PC-9 (cell line): ENCODE measurements at regions of chr6 and their contacts with region 1.

Region 1: DNA sequence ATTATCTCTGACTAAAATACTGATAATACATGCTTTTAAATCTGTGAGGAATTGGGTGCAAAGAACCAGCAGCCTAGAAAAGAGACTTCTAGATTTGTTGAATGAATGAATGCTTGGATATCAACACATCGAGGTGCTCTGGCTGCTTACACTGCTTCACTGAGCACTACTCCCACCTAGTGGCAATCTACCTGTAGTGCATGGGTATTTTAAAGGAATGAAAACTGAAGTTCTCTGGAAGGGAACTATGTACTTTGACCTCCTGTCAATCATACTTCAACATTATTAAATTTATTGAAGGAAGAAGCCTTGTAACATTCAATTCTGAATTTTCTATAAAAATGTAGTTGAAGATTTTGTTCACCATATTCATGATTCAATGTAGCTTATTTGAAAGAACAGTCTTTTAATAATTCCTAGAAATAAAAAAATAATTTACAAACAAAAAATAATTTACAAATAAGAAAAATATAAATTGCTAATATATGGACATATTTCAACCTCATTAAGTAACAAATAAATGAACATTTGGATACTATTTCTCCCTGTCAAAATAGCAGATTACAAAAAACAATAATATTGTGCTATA is 111.2 kb upstream of the MMS22L start:
- DNase-seq: peak; percentile 15 to 52
- H3K4me3 ChIP-seq: no peak overlapping the region
- H3K27ac ChIP-seq: no peak overlapping the region
- H3K4me1 ChIP-seq: no peaks in the 10 kb centered on the region
- H3K27me3 ChIP-seq: no peaks in the 10 kb centered on the region
- CTCF ChIP-seq: peak; percentile 96

Region 2: DNA sequence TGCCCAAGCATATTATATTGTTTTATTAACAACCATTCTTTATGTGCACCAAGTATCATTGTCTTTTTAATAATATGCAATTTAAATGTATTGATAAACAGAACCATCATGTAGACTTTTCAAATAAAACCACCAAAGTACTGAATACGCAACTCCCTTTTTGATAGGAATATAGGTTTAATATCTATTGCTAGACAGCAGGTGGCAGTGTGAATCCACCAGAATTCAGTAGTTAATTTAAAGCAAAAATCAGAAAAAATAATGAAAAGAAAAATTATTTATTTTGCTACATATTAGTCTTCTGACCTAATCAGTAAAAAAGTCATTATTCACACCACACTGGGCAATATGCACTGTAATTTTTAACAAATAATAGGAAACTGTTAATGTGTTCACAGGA is 326.0 kb before region 1 on chr6:
- CTCF ChIA-PET with region 1: no interaction called
- POLR2A ChIA-PET with region 1: no interaction called
- intact Hi-C with region 1: loop called (anchors 1 kb)
- DNase-seq: no peak
- H3K4me3 ChIP-seq: no peak overlapping the region
- H3K27ac ChIP-seq: no peak overlapping the region
- H3K4me1 ChIP-seq: no peaks in the 10 kb centered on the region
- H3K27me3 ChIP-seq: no peaks in the 10 kb centered on the region
- CTCF ChIP-seq: peak; percentile 88

Region 3: GRCh38 chr6:97186416-97186999 is 207.7 kb before region 1 on chr6:
- CTCF ChIA-PET with region 1: no interaction called
- POLR2A ChIA-PET with region 1: no interaction called
- intact Hi-C with region 1: loop called (anchors 1 kb)
- DNase-seq: peak in 1 of 2 experiments; percentile 39
- H3K4me3 ChIP-seq: no peak overlapping the region
- H3K27ac ChIP-seq: no peak overlapping the region
- H3K4me1 ChIP-seq: no peaks in the 10 kb centered on the region
- H3K27me3 ChIP-seq: no peaks in the 10 kb centered on the region
- CTCF ChIP-seq: peak; percentile 82

Region 4: DNA sequence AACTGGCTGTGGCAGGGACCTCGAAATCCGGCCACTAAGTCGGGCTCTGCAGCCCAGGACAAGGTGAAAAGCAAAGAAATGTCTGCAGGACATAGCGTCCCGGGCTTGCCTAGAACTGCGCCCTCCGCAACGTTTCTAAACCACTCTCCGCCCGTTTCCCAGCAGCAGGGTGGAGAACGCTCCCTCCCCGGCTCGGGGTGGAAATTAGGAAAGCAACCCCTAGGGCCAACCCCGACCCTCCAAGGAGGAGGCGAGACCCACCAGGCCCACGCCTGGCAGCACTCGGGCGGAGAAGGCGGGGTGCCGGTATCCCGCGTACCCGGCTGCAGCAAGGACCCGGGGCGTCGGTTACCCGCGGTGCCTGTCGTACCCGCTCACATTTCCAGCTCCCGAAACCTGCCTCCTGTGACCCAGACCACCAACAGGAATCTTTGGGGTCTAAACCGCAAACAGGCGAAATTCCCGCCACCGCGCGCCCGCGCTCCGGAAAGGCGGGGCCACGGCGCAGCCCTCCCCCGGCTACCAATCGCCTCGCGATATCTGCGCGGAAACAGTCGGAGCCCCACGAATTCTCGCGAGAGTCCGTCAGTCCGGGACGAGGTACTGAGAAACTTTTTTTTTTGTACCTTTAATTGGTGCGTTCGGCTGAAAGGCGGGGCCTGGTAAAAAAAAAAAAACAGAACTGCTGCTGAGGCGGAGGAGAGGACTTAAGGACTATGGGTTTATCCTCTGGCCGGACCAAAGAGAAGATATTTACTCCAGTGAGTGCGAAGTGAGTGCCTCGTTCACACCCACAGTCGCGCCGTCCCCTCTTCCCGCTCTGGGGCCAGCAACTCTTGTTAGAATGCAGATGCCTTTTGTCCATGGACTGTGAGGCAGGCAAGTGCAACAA is 111.3 kb before region 1 on chr6 and contains the start of gene MMS22L:
- CTCF ChIA-PET with region 1: no interaction called
- POLR2A ChIA-PET with region 1: no interaction called
- intact Hi-C with region 1: loop called (anchors 5 kb)
- DNase-seq: peak; percentile 88 to 91
- H3K4me3 ChIP-seq: peak within 1 kb of the TSS; percentile 93
- H3K27ac ChIP-seq: peak within 1 kb of the TSS; percentile 17; the same call in 1 of the 2 replicates
- H3K4me1 ChIP-seq: peaks cover 21% of the 10 kb centered on the region
- H3K27me3 ChIP-seq: no peaks in the 10 kb centered on the region
- CTCF ChIP-seq: no peak
- total RNA-seq, gene MMS22L: 31.5 and 43.6 TPM in 2 replicates